MCF 10A (cell line): ENCODE measurements at regions of chr6 and their contacts with region 1.

Region 1: DNA sequence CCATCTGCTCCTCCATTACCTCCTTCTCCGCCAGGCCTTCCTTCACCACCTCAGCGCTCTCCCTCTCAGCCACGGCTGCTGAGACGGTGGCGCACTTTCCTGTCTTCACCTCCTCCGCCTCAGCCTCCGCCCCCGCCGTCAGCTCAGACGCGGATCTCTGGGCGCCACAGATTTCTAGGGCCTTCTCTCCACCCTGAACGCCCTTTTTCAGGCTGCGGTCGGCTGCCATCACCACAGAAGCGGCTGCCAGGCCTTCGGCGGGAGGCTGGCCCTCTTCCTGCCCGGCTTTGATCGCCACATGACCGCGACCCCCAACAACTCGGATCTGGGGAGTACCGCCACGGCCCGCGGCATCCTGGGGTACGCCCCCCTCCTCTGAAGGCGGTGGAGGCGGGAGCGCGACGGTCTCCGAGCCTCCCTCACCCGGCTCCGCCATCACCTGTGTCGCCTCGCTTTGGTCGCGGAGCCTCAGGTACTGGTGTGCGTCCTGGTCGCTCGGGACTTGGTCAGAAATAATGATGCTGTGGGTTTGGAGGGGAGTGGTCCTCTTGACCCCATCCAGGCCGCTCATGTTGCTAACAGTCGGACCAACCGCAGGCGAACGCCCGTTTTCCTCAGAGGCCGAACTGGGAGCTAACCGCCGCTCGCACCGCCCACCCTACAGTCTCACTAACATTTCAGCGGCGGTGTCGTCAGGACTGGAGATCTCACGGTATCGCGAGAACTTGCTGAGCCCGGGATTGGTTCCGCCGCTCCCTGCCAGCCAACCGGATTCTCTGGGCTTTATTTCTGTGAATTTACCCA is at the start of gene TSPYL1:
- DNase-seq: peak; percentile 98
- H3K4me3 Mint-ChIP-seq: peak within 1 kb of the TSS; percentile 86
- H3K27ac Mint-ChIP-seq: peak within 1 kb of the TSS; percentile 85
- H3K4me1 Mint-ChIP-seq: peaks cover 33% of the 10 kb centered on the region
- H3K27me3 Mint-ChIP-seq: no peaks in the 10 kb centered on the region
- CTCF ChIP-seq: no peak
- total RNA-seq, gene TSPYL1: 67.4 and 85.0 TPM in 2 replicates

Region 2: DNA sequence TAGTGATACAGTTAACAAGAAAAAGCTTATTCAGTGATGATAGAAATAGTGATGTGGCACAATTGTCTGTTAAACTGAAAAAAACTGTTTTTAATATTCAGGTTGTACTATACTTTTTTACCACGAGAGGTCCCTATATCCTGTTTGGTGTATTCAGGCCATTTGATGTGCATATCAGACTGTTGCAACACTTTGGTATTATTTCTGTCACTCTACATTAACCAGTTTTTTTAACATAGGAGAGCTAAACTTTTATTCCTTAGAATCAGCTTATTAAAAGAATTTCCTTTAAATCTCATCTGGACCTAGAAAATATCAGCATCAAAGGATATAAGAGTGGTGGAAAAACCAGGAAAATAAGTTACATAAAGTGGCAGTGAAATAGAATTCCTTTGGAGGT is 62.4 kb before region 1 on chr6:
- CTCF ChIA-PET with region 1: interaction called, 4 read pairs
- POLR2A ChIA-PET with region 1: interaction called, 26 read pairs
- intact Hi-C with region 1: no loop called
- DNase-seq: peak; percentile 62
- H3K4me3 Mint-ChIP-seq: no peak overlapping the region
- H3K27ac Mint-ChIP-seq: no peak overlapping the region
- H3K4me1 Mint-ChIP-seq: no peaks in the 10 kb centered on the region
- H3K27me3 Mint-ChIP-seq: no peaks in the 10 kb centered on the region
- CTCF ChIP-seq: peak; percentile 63

Region 3: DNA sequence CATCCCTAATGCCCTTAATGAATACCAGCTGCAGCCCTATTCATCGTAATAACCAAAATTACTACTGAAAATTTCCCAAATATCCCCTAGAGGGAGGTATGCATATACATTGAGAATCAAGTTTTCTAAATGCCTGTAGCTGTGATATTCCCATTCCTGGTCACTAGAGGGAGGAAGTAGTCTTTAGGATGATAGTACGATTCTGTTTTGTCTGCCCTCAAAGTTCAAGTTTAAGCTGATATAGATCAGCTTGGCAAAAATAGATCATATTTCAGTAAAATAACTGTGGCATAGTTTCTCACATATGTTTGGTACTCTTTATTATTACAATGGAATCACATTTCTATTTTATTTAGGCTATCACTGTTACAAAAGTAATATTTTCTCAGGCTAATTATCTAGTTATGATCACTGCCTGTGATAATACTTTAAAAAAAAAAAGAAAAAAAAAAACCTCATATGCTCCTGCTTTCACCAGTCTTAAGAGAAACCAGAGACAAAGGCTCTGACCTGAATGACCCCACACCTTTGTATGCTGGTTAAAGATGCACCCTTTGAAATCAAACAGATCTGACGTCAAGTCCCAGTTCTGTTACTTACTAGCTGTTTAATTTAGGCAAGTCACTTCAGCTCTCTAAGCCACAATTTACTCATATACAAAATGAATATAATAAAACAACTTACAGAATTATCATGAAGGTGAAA is 10.7 kb before region 1 on chr6:
- CTCF ChIA-PET with region 1: interaction called, 60 read pairs
- POLR2A ChIA-PET with region 1: interaction called, 103 read pairs
- intact Hi-C with region 1: no loop called
- DNase-seq: peak; percentile 82
- H3K4me3 Mint-ChIP-seq: no peak overlapping the region
- H3K27ac Mint-ChIP-seq: peak overlapping the region; percentile 49
- H3K4me1 Mint-ChIP-seq: peaks cover 17% of the 10 kb centered on the region
- H3K27me3 Mint-ChIP-seq: no peaks in the 10 kb centered on the region
- CTCF ChIP-seq: peak; percentile 80

Region 4: DNA sequence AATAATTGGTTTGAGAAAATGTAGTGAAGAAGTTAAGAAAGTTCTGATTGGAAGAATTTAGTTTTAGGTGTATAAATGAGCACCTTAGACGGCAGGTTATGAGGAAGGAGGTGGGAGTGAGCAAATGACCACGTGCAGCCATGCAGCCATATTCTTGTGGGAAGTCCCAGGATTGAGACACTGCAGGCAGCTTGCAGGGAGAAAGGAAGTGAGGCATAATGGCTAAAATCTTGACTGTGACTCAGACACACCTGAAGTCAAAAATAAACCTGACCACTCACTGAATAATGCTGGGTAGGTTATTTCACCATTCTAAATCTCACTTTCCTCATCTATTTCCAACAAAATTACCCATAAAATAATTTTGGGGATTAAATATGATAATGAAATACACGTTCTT is 107.9 kb after region 1 on chr6:
- CTCF ChIA-PET with region 1: no interaction called
- POLR2A ChIA-PET with region 1: interaction called, 44 read pairs
- intact Hi-C with region 1: no loop called
- DNase-seq: peak; percentile 96
- H3K4me3 Mint-ChIP-seq: peak overlapping the region; percentile 50
- H3K27ac Mint-ChIP-seq: peak overlapping the region; percentile 89
- H3K4me1 Mint-ChIP-seq: peaks cover 56% of the 10 kb centered on the region
- H3K27me3 Mint-ChIP-seq: no peaks in the 10 kb centered on the region
- CTCF ChIP-seq: no peak

Region 5: DNA sequence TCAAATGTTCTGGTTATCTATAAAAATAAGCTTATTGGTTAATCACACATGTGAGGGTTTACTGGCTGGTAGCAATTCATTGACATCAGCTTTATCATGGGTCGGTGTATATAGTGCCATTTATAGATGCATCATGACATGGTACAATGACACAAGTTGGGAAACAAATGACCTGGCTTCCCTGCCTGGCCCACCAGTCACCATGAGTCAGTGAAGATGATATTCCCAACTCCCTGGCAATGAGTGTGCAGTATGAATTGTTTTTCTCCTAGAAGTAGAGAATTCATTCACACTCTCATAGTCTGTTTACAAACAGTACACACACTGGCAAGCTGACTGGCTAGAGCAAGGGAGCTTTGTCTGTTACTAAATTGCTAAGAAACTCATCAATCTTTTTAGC is 144.5 kb after region 1 on chr6:
- CTCF ChIA-PET with region 1: interaction called, 4 read pairs
- POLR2A ChIA-PET with region 1: interaction called, 23 read pairs
- intact Hi-C with region 1: no loop called
- DNase-seq: peak; percentile 45
- H3K4me3 Mint-ChIP-seq: no peak overlapping the region
- H3K27ac Mint-ChIP-seq: peak overlapping the region; percentile 9
- H3K4me1 Mint-ChIP-seq: peaks cover 8% of the 10 kb centered on the region
- H3K27me3 Mint-ChIP-seq: no peaks in the 10 kb centered on the region
- CTCF ChIP-seq: no peak

Region 6: DNA sequence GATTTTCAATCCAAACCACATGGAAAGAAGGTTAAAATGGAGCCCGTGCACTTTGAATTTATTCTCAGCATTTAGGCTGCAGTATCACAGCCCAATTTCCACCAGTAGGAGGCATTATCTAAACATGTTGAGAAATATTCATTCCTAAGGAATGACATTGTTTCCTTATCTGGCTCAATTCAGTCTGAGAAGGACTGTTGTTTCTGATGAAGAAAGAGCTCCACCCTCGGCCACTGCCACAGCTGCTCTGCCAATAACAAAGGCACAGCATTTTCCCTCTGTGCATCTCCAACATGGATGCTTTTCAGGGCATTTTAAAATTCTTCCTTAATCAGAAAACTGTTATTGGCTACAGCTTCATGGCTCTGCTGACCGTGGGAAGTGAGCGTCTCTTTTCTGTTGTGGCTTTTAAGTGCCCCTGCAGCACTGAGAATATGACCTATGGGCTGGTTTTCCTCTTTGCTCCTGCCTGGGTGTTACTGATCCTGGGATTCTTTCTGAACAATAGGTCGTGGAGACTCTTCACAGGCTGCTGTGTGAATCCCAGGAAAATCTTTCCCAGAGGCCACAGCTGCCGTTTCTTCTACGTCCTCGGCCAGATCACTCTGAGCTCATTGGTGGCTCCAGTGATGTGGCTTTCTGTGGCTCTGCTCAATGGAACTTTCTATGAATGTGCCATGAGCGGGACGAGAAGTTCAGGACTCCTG is 232.1 kb after region 1 on chr6 and contains the start of gene CALHM5:
- CTCF ChIA-PET with region 1: no interaction called
- POLR2A ChIA-PET with region 1: interaction called, 14 read pairs
- intact Hi-C with region 1: no loop called
- DNase-seq: peak; percentile 75
- H3K4me3 Mint-ChIP-seq: no peak within 1 kb of the TSS
- H3K27ac Mint-ChIP-seq: no peak within 1 kb of the TSS
- H3K4me1 Mint-ChIP-seq: peaks cover 6% of the 10 kb centered on the region
- H3K27me3 Mint-ChIP-seq: no peaks in the 10 kb centered on the region
- CTCF ChIP-seq: peak; percentile 59
- total RNA-seq, gene CALHM5: not detected in 2 replicates

Region 7: DNA sequence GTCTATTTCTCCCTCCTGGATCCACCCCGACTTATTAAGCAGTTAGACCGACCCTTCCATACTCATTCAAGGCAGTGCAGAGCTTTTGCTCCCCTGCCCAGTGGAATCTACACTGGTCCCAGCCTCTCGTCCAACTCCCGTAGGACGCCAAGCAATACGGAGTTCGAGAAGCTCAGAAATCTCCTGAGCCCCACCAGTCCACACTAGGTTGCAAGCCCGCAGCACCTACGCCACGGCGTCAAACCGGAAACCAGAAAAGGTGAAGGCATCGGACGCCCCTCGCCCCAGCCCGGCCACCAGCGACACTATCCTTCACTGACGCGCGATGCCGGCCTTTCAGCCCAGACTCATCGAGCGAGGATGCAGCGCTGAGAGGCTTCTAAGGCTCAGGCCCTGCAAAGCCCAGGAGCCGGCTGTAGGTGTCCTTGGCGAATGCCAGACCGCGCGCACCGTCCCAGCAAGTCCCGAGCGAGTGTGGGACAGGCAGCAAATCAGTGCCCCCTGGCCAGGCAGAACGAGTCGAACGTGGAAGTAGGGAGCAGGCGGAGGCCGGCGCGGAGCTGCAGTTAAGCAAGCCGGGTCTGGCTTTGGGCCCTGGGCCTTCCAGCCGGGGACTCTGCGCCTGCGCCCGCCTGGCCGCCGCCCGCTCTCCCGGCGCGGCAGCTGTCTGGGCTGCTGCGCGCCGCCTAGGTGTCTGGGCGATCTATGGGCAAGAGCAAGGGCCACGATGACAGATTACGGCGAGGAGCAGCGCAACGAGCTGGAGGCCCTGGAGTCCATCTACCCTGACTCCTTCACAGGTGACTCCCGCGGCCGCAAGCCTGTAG is 291.6 kb after region 1 on chr6 and contains the start of gene RWDD1:
- CTCF ChIA-PET with region 1: interaction called, 4 read pairs
- POLR2A ChIA-PET with region 1: interaction called, 83 read pairs
- intact Hi-C with region 1: no loop called
- DNase-seq: peak; percentile 98
- H3K4me3 Mint-ChIP-seq: peak within 1 kb of the TSS; percentile 98
- H3K27ac Mint-ChIP-seq: peak within 1 kb of the TSS; percentile 98
- H3K4me1 Mint-ChIP-seq: peaks cover 25% of the 10 kb centered on the region
- H3K27me3 Mint-ChIP-seq: no peaks in the 10 kb centered on the region
- CTCF ChIP-seq: no peak
- total RNA-seq, gene RWDD1: 41.6 and 57.2 TPM in 2 replicates